Ovary (tissue), 10 donors: ENCODE measurements at regions of chr18 and their contacts with region 1.

Region 1: GRCh38 chr18:5868218-5869115 is 26.9 kb downstream of the TMEM200C start:
- DNase-seq: peak; percentile 59 to 75 (median 70)
- H3K4me3 ChIP-seq: no peak overlapping the region
- H3K27ac ChIP-seq: no peak overlapping the region
- H3K4me1 ChIP-seq: no peaks in the 10 kb centered on the region
- H3K27me3 ChIP-seq: no peaks in the 10 kb centered on the region
- CTCF ChIP-seq: peak; percentile 34 to 68 (median 58)
- EP300 ChIP-seq: no peak
- POLR2A ChIP-seq: no peak

Region 2: GRCh38 chr18:5806860-5807259 is 61.6 kb before region 1 on chr18:
- intact Hi-C with region 1: no loop called
- DNase-seq: no peak
- H3K4me3 ChIP-seq: no peak overlapping the region
- H3K27ac ChIP-seq: no peak overlapping the region
- H3K4me1 ChIP-seq: no peaks in the 10 kb centered on the region
- H3K27me3 ChIP-seq: no peaks in the 10 kb centered on the region
- CTCF ChIP-seq: no peak
- EP300 ChIP-seq: no peak
- POLR2A ChIP-seq: no peak

Region 3: DNA sequence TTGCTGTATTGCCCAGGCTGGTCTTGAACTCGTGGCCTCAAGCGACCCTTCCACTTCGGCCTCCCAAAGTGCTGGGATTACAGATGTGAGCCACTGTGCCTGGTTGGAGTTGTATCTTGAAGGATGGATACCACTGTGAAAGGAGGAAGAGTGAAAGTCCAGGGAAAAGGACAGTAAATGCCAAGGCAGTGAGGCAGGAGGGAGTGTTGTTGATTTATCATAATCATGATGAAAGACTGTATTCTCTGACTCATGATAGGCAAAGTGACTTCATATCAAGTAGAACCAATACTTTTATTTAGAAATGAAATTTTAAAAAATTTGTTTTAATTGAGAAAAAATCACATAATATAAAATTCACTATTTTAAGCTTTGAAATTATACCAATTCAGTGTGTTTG is 1023.3 kb after region 1 on chr18:
- intact Hi-C with region 1: loop called in 2 of 4 experiments (anchors 5 to 10 kb)
- DNase-seq: no peak
- H3K4me3 ChIP-seq: no peak overlapping the region
- H3K27ac ChIP-seq: no peak overlapping the region
- H3K4me1 ChIP-seq: no peaks in the 10 kb centered on the region
- H3K27me3 ChIP-seq: no peaks in the 10 kb centered on the region
- CTCF ChIP-seq: no peak
- EP300 ChIP-seq: no peak
- POLR2A ChIP-seq: no peak